ENCODE measurements at regions of chr13 and their contacts with region 1.

Region 1: DNA sequence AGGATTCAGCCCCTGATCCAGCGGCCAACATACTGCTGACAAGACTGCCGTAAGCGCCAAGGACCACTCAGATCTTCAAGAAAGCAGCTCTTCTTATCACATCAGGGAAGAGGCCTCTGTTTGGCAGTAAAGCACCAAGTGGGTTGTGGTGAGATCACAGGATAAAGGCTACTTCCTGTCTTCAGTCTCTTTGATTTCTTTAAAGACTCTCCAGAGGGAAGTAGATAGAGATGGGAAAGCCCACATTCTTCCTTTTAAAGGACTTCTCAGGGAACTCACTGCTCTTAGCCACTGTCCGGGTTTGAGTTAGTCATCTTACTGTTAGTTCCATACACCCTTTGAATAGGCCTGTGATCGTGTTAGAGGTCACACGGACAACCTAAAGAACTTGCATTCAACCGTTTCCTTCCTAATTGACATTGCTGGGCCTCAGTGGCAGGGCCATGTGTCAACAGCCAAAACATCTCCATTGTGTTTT is 47.2 kb upstream of the POMP start:
- DNase-seq: peak in 5 of 9 experiments; percentile 3 to 50 (median 16)
- ATAC-seq: peak; percentile 52
- H3K4me3 ChIP-seq: no peak overlapping the region
- H3K4me3 Mint-ChIP-seq: no peak overlapping the region
- H3K27ac ChIP-seq: no peak overlapping the region
- H3K27ac Mint-ChIP-seq: no peak overlapping the region
- H3K4me1 ChIP-seq: peaks cover 13% of the 10 kb centered on the region
- H3K4me1 Mint-ChIP-seq: peaks cover 16% of the 10 kb centered on the region
- H3K27me3 ChIP-seq: no peaks in the 10 kb centered on the region
- H3K27me3 Mint-ChIP-seq: no peaks in the 10 kb centered on the region
- CTCF ChIP-seq: no peak

Region 2: GRCh38 chr13:28953714-28954418 is 342.2 kb after region 1 on chr13:
- CTCF ChIA-PET with region 1: no interaction called
- POLR2A ChIA-PET with region 1: no interaction called
- intact Hi-C with region 1: loop called in 1 of 2 experiments (anchors 10 kb)
- DNase-seq: no peak
- ATAC-seq: no peak
- H3K4me3 ChIP-seq: no peak overlapping the region
- H3K4me3 Mint-ChIP-seq: no peak overlapping the region
- H3K27ac ChIP-seq: no peak overlapping the region
- H3K27ac Mint-ChIP-seq: no peak overlapping the region
- H3K4me1 ChIP-seq: no peaks in the 10 kb centered on the region
- H3K4me1 Mint-ChIP-seq: no peaks in the 10 kb centered on the region
- H3K27me3 ChIP-seq: no peaks in the 10 kb centered on the region
- H3K27me3 Mint-ChIP-seq: no peaks in the 10 kb centered on the region
- CTCF ChIP-seq: no peak

Region 3: DNA sequence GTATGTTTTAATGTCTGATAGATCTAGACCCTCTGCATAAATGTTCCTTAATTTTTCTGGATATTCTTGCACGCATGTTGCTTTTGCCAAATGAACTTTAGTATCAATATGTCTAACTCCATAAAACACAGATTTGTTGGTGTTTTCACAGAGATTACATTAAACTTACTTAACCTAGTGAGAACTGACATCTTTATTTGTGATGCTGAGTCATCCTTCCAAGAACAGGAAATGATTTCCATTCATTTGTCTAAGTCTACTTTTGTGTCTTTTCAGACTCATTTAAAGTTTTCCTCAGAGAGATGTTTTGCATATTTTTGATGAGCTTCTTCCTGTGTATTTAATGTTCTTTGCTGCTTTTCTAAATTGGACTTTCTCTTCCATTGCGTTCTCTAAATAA is 799.8 kb after region 1 on chr13:
- CTCF ChIA-PET with region 1: no interaction called
- POLR2A ChIA-PET with region 1: no interaction called
- intact Hi-C with region 1: no loop called
- DNase-seq: no peak
- ATAC-seq: no peak
- H3K4me3 ChIP-seq: no peak overlapping the region
- H3K4me3 Mint-ChIP-seq: no peak overlapping the region
- H3K27ac ChIP-seq: no peak overlapping the region
- H3K27ac Mint-ChIP-seq: no peak overlapping the region
- H3K4me1 ChIP-seq: no peaks in the 10 kb centered on the region
- H3K4me1 Mint-ChIP-seq: no peaks in the 10 kb centered on the region
- H3K27me3 ChIP-seq: no peaks in the 10 kb centered on the region
- H3K27me3 Mint-ChIP-seq: peaks cover 9% of the 10 kb centered on the region
- CTCF ChIP-seq: no peak

Measured in CD8-positive, alpha-beta T cell (primary cell).